GM12878 (cell line): ENCODE measurements at regions of chr7 and their contacts with region 1.

Region 1: GRCh38 chr7:20299647-20300312 is 30.9 kb upstream of the ITGB8 start:
- DNase-seq: peak; percentile 83
- ATAC-seq: peak; percentile 70
- H3K4me3 ChIP-seq: no peak overlapping the region
- H3K27ac ChIP-seq: peak overlapping the region; percentile 76
- H3K4me1 ChIP-seq: peaks cover 16% of the 10 kb centered on the region
- H3K27me3 ChIP-seq: no peaks in the 10 kb centered on the region
- CTCF ChIP-seq: no peak
- EP300 ChIP-seq: no peak
- POLR2A ChIP-seq: no peak
- RAD21 ChIP-seq: no peak

Region 2: DNA sequence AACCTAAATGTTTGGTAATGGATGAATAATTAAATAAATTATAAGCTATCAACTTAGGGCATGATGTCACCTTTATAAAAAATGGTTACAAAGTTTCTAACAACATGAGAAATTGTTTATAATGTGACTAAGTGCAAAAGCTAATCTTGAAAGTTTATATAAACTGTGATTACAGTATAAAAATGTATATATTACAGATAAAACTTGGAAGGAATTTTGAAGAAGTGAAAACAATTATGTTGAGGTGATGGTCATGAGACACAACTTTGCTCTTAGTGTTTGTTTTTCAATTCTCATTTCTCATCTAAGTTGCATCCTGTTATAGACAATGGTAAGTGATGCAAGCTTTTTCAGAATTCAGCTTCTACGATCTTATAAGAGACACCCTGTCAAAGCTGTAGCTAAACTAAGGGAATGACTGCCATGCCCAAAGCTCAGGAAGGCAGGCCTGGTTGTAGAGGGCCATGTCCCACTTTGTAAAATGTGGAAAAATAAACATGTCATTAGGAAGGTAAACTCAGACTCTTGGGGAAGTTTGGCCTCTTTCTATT is 106.5 kb before region 1 on chr7:
- CTCF ChIA-PET with region 1: interaction called, 10 read pairs
- POLR2A ChIA-PET with region 1: interaction called, 3 read pairs
- RAD21 ChIA-PET with region 1: interaction called, 9 read pairs
- SMC1A ChIA-PET with region 1: interaction called, 17 read pairs
- in situ Hi-C with region 1: no loop called
- intact Hi-C with region 1: no loop called
- DNase-seq: no peak
- ATAC-seq: peak; percentile 83
- H3K4me3 ChIP-seq: no peak overlapping the region
- H3K27ac ChIP-seq: peak overlapping the region; percentile 63
- H3K4me1 ChIP-seq: peaks cover 24% of the 10 kb centered on the region
- H3K27me3 ChIP-seq: no peaks in the 10 kb centered on the region
- CTCF ChIP-seq: no peak
- EP300 ChIP-seq: peak; percentile 48 to 58; a peak in 2 of 4 replicates
- POLR2A ChIP-seq: no peak
- RAD21 ChIP-seq: no peak

Region 3: GRCh38 chr7:20270867-20271266 is 28.9 kb before region 1 on chr7:
- CTCF ChIA-PET with region 1: interaction called, 4 read pairs
- POLR2A ChIA-PET with region 1: interaction called, 6 read pairs
- RAD21 ChIA-PET with region 1: interaction called, 14 read pairs
- SMC1A ChIA-PET with region 1: interaction called, 7 read pairs
- in situ Hi-C with region 1: no loop called
- intact Hi-C with region 1: no loop called
- DNase-seq: peak; percentile 74
- ATAC-seq: peak; percentile 90
- H3K4me3 ChIP-seq: no peak overlapping the region
- H3K27ac ChIP-seq: peak overlapping the region; percentile 73
- H3K4me1 ChIP-seq: peaks cover 17% of the 10 kb centered on the region
- H3K27me3 ChIP-seq: no peaks in the 10 kb centered on the region
- CTCF ChIP-seq: no peak
- EP300 ChIP-seq: no peak
- POLR2A ChIP-seq: no peak
- RAD21 ChIP-seq: no peak

Region 4: GRCh38 chr7:20280475-20281351 is 19.1 kb before region 1 on chr7:
- CTCF ChIA-PET with region 1: interaction called, 6 read pairs
- POLR2A ChIA-PET with region 1: interaction called, 5 read pairs
- RAD21 ChIA-PET with region 1: interaction called, 11 read pairs
- SMC1A ChIA-PET with region 1: interaction called, 148 read pairs
- in situ Hi-C with region 1: no loop called
- intact Hi-C with region 1: loop called (anchors 1 kb)
- DNase-seq: no peak
- ATAC-seq: peak; percentile 23
- H3K4me3 ChIP-seq: no peak overlapping the region
- H3K27ac ChIP-seq: no peak overlapping the region
- H3K4me1 ChIP-seq: peaks cover 11% of the 10 kb centered on the region; the same call in 1 of the 2 replicates
- H3K27me3 ChIP-seq: no peaks in the 10 kb centered on the region
- CTCF ChIP-seq: no peak
- EP300 ChIP-seq: no peak
- POLR2A ChIP-seq: no peak
- RAD21 ChIP-seq: no peak

Region 5: DNA sequence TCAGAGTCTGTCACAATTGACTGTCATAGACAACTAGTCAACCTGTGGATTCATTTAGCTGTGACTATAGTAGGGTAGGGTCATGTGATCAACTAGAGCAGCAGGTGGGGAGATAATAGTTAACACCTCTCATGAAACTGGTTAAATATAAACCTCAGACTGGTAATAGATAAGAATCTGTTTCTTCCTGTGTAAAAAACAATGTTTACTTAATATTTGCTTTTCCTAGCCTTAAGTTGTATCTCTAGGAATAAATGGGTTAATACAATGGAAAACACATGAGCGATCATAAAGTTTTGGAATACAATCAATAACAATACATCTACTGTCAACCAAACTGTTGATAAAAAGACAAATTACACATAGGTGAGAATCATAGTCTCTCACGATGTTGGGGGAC is 12.5 kb before region 1 on chr7:
- CTCF ChIA-PET with region 1: interaction called, 44 read pairs
- POLR2A ChIA-PET with region 1: interaction called, 30 read pairs
- RAD21 ChIA-PET with region 1: interaction called, 83 read pairs
- SMC1A ChIA-PET with region 1: interaction called, 148 read pairs
- in situ Hi-C with region 1: no loop called
- intact Hi-C with region 1: loop called (anchors 1 kb)
- DNase-seq: no peak
- ATAC-seq: peak; percentile 52
- H3K4me3 ChIP-seq: no peak overlapping the region
- H3K27ac ChIP-seq: no peak overlapping the region
- H3K4me1 ChIP-seq: peaks cover 19% of the 10 kb centered on the region
- H3K27me3 ChIP-seq: no peaks in the 10 kb centered on the region
- CTCF ChIP-seq: no peak
- EP300 ChIP-seq: peak; percentile 53 to 74; a peak in 3 of 4 replicates
- POLR2A ChIP-seq: no peak
- RAD21 ChIP-seq: no peak

Region 6: GRCh38 chr7:20316706-20317105 is 16.9 kb after region 1 on chr7:
- CTCF ChIA-PET with region 1: interaction called, 20 read pairs
- POLR2A ChIA-PET with region 1: interaction called, 3 read pairs
- RAD21 ChIA-PET with region 1: interaction called, 35 read pairs
- SMC1A ChIA-PET with region 1: interaction called, 43 read pairs
- in situ Hi-C with region 1: no loop called
- intact Hi-C with region 1: no loop called
- DNase-seq: no peak
- ATAC-seq: no peak
- H3K4me3 ChIP-seq: no peak overlapping the region
- H3K27ac ChIP-seq: no peak overlapping the region
- H3K4me1 ChIP-seq: no peaks in the 10 kb centered on the region
- H3K27me3 ChIP-seq: no peaks in the 10 kb centered on the region
- CTCF ChIP-seq: no peak
- EP300 ChIP-seq: no peak
- POLR2A ChIP-seq: no peak
- RAD21 ChIP-seq: no peak